Thyroid gland (tissue), 4 donors: ENCODE measurements at regions of chr4 and their contacts with region 1.

Region 1: DNA sequence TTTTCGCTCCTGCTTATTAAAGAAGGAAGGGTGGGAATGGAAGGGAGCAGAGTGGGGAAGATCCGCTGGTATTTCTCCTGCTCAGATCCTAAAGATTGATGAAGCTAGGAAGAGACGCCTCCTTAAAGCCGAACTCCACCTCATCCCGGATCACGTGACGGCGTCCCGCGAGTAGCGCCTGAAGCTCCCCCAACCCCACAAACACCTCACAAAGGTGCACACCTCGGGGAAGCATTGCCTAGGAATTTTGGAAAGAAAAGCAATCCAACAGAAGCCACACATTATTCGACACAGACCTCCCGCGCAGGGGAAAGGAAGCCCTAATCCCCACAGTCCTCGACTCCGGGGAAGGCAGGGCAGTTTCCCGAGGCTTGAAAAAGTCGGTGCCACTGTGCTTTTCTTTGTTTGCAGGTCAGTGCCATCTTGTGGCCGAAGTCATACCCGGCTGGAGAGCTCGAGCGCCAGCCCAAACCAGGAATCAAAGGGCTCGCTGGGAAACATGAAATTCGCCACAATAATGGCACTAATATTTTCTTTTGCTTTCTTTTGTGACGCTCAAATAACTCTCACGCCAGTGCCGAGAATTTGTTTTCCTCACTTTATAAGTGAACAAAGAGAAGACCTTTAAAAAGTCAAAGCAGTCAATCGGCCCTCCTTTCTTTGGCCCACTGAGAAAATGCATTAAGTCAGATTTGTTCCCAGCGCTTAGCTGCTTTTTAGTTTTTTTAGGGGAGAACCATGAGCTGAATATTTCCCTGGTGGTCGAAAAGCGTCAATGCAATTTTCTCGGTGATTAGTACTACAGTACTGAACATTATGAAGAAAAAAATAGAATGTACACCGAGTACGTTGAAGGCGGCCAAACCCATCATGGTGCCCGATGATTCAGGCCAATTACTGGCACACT is at the start of gene NPY1R:
- DNase-seq: peak; percentile 67 to 74
- H3K4me3 ChIP-seq: peak within 1 kb of the TSS; percentile 12 to 69 (median 43)
- H3K27ac ChIP-seq: peak within 1 kb of the TSS in 1 of 3 donors; percentile 40
- H3K4me1 ChIP-seq: no peaks in the 10 kb centered on the region
- H3K27me3 ChIP-seq: no peaks in the 10 kb centered on the region
- CTCF ChIP-seq: peak; percentile 29 to 69 (median 57)
- POLR2A ChIP-seq: no peak
- total RNA-seq, gene NPY1R: 5.7 to 16.7 (median 9.0) TPM

Region 2: GRCh38 chr4:162497564-162498167 is 835.1 kb before region 1 on chr4:
- intact Hi-C with region 1: loop called (anchors 10 kb)
- DNase-seq: peak in 1 of 2 donors; percentile 4
- H3K4me3 ChIP-seq: no peak overlapping the region
- H3K27ac ChIP-seq: no peak overlapping the region
- H3K4me1 ChIP-seq: no peaks in the 10 kb centered on the region
- H3K27me3 ChIP-seq: no peaks in the 10 kb centered on the region
- CTCF ChIP-seq: peak; percentile 57 to 89 (median 80)
- POLR2A ChIP-seq: no peak